Right ventricle myocardium inferior (tissue), 1 donor: ENCODE measurements at regions of chr18 and their contacts with region 1.

Region 1: DNA sequence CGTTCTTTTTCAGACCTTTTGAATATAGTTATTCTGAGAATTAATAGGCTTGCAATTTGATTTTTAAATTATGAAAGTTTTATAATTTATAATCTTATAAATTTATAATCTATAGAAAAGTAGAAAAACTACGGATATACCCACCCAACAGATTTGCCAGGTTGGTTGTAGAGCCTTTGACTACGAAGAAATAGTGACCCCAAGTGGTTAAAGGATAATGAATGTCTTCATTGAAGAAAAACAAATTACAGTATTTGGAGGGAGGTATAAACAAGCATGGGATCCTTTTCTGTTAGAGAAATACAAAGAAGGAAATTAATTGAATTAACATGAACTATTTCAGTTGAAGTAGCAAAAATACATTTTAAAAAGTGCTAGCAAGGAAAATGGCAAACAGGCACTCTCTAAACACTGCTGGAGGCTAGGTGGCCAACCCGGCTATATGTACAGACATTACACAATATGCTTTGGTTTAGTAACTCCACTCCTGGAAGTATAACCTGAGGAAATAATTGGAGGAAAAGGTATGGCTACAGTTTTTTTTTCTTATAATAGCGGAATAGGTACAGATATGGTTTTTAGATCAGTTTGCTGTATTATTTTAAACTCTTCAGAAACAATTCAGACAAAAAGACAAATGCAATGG is 110.9 kb downstream of the MIB1 start:
- DNase-seq: no peak
- ATAC-seq: no peak

Region 2: DNA sequence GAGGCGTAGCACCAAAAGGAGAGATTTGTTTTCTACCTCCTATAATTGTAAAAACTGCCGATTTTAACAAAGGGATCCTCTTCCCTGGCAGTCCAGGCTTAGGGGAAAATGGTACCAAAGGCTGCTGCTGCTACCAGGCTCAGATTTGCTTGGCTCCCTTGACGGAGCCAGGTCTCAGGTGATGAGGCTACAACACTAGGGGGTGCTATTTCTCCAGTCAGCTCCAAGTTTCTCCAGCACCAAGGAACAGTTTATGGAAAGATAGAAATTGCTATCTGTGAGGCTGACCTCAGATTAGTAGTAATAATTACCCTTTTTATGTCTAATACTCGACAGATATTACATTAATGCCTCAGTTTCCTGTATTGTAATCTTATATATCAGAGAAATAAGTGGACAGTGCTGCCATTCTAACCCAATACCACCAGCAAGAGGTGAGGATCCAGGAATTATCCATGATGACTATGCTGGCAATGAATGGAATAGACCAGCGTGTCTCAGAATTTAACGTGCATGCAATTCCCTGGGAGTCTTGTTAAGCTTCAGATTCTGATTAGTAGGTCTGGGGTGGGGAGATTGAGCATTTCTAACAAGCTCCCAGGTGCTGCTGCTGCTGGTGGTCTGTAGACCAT is 362.2 kb before region 1 on chr18:
- intact Hi-C with region 1: loop called (anchors 10 kb)
- DNase-seq: no peak
- ATAC-seq: peak; percentile 48

Region 3: GRCh38 chr18:21820035-21820810 is 31.2 kb before region 1 on chr18:
- intact Hi-C with region 1: loop called (anchors 2 kb)
- DNase-seq: no peak
- ATAC-seq: no peak